ENCODE measurements at regions of chr20 and their contacts with region 1.

Region 1: DNA sequence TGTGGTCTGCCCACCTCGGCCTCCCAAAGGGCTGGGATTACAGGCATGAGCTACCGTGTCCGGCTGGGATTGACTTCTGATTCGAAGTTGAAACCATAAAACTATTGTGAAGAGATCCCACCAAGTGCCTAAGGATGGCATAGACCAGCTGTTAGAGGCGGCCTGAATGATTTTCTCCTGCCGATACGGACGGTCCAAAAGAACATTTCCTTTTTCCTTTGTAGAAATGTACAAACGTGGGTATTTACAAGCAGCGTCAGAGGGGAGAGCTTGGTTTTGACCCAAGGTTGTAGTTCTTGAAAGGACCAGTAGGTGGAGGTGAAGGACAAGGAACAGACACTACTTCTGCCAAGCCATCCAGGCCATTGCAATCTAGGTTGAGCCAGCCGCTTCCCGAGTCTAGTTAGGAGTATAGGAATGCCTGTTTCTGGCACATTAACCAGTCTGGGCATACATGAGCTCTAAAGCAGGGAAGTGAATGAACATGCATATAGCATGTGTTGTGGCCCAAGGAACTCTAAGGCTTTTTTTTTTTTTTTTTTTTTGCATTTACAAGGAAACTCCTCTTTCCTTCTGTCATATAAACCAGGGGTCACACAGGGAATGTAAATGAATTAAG is 29.1 kb downstream of the MOCS3 start:
- DNase-seq: peak; percentile 99
- ATAC-seq: peak; percentile 97
- H3K4me3 ChIP-seq: 0 out of 2 replicates have a peak overlapping the region, but pooled peaks have one; percentile 10
- H3K27ac ChIP-seq: no peak overlapping the region
- H3K4me1 ChIP-seq: peaks cover 18% of the 10 kb centered on the region
- H3K27me3 ChIP-seq: no peaks in the 10 kb centered on the region
- CTCF ChIP-seq: peak; percentile 98

Region 2: GRCh38 chr20:49915378-49916145 is 1072.1 kb before region 1 on chr20 and contains the start of gene SPATA2:
- CTCF ChIA-PET with region 1: no interaction called
- POLR2A ChIA-PET with region 1: no interaction called
- intact Hi-C with region 1: no loop called
- DNase-seq: peak; percentile 96
- ATAC-seq: peak; percentile 88
- H3K4me3 ChIP-seq: peak within 1 kb of the TSS; percentile 81
- H3K27ac ChIP-seq: peak within 1 kb of the TSS; percentile 96
- H3K4me1 ChIP-seq: peaks cover 23% of the 10 kb centered on the region
- H3K27me3 ChIP-seq: no peaks in the 10 kb centered on the region
- CTCF ChIP-seq: no peak
- total RNA-seq, gene SPATA2: 7.4 and 8.1 TPM in 2 replicates

Region 3: DNA sequence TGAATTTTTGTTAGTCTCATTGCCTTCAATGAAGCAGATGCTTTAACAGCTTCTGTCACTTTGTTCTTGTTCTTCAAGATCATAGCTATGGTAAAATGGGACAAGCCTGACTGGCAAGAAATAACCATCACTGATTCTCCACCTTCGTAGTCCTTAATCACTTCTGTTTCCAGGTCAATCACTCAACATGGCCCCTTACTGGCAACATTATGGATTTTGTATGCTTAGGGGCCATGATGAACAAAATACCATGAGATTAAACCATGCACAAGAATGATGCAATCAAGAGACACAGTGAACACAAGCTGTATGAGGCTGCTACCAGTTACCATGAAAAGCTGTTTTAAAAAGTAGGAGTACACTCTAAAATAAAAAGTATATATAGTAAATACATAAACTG is 89.2 kb before region 1 on chr20:
- CTCF ChIA-PET with region 1: no interaction called
- POLR2A ChIA-PET with region 1: no interaction called
- intact Hi-C with region 1: no loop called
- DNase-seq: no peak
- ATAC-seq: no peak
- H3K4me3 ChIP-seq: no peak overlapping the region
- H3K27ac ChIP-seq: no peak overlapping the region
- H3K4me1 ChIP-seq: no peaks in the 10 kb centered on the region
- H3K27me3 ChIP-seq: no peaks in the 10 kb centered on the region
- CTCF ChIP-seq: no peak

Region 4: GRCh38 chr20:51014797-51015722 is 27.4 kb after region 1 on chr20:
- CTCF ChIA-PET with region 1: interaction called, 17 read pairs
- POLR2A ChIA-PET with region 1: no interaction called
- intact Hi-C with region 1: no loop called
- DNase-seq: peak; percentile 90
- ATAC-seq: peak; percentile 85
- H3K4me3 ChIP-seq: no peak overlapping the region
- H3K27ac ChIP-seq: no peak overlapping the region
- H3K4me1 ChIP-seq: no peaks in the 10 kb centered on the region
- H3K27me3 ChIP-seq: no peaks in the 10 kb centered on the region
- CTCF ChIP-seq: peak; percentile 98

Region 5: DNA sequence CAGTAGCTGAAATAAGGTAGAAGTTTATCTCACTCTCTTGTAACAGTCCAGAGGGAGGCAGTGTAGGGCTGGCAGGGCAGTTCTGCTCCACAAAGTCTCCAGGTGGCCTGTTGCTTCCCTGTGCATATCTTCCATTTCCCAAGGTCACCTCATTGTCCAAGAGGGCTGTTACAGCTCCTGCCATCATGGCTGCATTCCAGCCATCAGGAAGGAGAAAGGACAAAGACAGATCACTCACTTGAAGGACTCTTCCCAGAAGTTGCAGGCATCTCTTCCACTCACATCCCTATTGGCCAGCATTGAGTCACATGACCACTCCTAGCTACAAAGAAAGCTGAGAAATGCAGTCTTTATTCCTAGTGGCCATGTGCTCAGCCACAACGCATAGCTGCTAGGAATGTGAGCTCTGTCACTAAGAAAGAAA is 185.3 kb after region 1 on chr20:
- CTCF ChIA-PET with region 1: no interaction called
- POLR2A ChIA-PET with region 1: no interaction called
- intact Hi-C with region 1: no loop called
- DNase-seq: no peak
- ATAC-seq: no peak
- H3K4me3 ChIP-seq: no peak overlapping the region
- H3K27ac ChIP-seq: no peak overlapping the region
- H3K4me1 ChIP-seq: no peaks in the 10 kb centered on the region
- H3K27me3 ChIP-seq: peaks cover 11% of the 10 kb centered on the region
- CTCF ChIP-seq: peak; percentile 47

Region 6: DNA sequence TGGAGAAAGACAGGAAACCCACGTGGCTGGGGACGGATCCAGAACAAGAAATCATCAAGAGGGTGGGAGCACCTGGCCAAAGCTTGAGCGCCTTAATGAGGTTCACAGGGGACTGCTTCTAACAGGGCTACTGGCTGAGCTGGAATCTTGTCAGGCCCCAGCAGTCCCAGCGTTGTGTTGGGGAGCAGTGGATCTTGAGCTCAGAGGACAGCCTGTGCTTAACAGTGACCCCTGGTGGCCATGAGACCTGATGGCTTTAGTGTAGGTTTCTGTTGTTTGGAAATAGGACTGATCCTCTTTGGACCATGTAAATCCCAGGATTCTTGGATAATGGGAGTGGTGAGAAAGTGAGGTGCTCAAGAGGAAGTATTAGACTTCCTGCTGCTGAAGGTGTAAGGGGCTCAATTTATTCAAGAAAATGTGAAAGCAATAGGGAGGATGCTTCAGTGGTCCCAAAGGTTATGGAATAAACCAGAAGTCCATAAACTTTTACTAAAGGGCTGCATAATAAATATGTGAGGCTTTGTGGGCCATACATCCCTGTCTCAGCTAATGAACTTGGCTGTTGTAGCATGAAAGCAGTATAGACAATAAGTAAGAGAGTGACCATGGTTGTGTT is 338.6 kb after region 1 on chr20:
- CTCF ChIA-PET with region 1: interaction called, 6 read pairs
- POLR2A ChIA-PET with region 1: no interaction called
- intact Hi-C with region 1: loop called (anchors 1 kb)
- DNase-seq: no peak
- ATAC-seq: no peak
- H3K4me3 ChIP-seq: no peak overlapping the region
- H3K27ac ChIP-seq: peak overlapping the region; percentile 88
- H3K4me1 ChIP-seq: peaks cover 17% of the 10 kb centered on the region
- H3K27me3 ChIP-seq: no peaks in the 10 kb centered on the region
- CTCF ChIP-seq: peak; percentile 77

Region 7: DNA sequence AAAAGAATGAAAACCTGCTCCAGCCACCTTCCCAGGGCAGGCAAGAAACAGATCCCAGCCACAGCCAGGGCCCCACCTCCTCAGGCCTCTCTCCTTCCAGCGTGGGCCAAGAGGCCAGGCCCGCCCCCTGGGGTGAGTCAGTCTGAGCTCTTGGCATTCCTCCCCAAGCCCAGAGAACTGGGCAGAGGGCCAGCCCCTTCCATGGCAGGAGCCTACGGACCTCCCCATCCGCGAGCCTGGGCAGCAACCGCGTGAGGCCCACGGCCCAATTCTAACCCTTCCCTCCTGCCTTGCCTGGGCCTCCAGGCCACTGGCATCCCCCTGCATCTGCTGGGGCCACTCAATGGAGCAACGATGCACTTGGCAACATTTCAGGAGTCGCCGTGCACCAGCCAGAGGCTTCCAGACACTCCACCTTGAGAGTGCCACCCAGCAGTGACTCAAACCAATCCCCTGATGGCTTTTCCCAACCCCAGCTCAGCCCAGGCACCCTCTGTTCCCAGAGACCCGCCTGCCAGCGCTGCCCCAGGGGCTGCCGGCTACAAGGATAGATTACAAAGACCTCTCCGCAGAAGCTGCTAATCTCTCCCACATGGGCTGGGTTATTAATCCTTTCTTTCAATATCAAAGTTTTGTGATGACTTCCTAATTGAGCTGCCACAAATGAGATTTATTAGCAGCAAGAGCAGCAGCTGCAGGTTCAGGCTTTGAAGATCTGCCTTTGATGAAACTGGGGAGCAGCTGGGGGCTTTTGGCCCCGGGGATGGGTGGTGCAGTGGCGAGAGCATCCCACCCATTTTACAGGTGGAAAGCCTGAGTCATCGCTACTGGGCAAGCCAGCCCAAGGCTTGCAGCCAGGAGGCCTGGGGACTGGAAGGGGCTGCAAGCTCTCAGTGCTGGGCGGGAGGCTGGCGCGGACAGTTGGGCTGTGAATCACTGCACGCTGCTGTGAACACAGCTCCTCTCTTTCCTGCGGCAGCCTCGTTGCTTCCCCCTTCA is 469.1 kb after region 1 on chr20:
- CTCF ChIA-PET with region 1: interaction called, 20 read pairs
- POLR2A ChIA-PET with region 1: no interaction called
- intact Hi-C with region 1: no loop called
- DNase-seq: peak; percentile 100
- ATAC-seq: peak; percentile 87
- H3K4me3 ChIP-seq: peak overlapping the region; percentile 55
- H3K27ac ChIP-seq: peak overlapping the region; percentile 91
- H3K4me1 ChIP-seq: peaks cover 24% of the 10 kb centered on the region
- H3K27me3 ChIP-seq: no peaks in the 10 kb centered on the region
- CTCF ChIP-seq: no peak

Region 8: DNA sequence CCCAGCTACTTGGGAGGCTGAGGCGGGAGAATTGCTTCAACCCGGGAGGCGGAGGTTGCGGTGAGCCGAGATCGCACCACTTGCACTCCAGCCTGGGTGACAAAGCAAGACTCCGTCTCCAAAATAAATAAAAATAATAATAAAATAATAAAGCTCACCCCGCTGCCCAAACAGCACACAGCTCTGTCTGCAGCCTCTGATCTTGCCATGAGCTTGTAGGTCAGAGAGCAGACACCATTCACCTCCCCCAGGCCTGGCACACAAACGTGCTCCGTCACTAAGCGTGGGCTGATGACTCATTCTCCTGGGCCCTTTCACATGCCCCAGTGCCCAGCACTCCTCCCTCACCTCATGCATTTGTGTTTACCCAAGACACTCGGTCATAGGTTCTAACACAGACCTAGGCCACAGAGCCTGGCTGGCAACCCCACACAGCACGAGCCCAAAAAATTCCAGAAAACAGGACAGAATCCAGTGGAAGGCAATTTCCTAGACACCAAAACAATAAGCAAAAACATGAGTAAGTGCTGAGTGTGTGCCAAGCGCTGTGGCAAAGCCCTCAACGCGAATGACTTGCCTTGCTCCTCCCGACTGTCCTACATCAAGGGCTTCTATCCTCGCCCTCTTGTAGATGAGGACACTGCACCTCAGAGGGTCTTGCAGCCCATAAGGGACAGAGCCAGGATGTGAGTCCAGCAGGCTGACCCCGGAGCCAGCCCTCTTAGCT is 762.5 kb after region 1 on chr20:
- CTCF ChIA-PET with region 1: no interaction called
- POLR2A ChIA-PET with region 1: no interaction called
- intact Hi-C with region 1: loop called (anchors 10 kb)
- DNase-seq: peak; percentile 100
- ATAC-seq: peak; percentile 87
- H3K4me3 ChIP-seq: peak overlapping the region; percentile 31; the same call in 1 of the 2 replicates
- H3K27ac ChIP-seq: peak overlapping the region; percentile 87
- H3K4me1 ChIP-seq: peaks cover 58% of the 10 kb centered on the region
- H3K27me3 ChIP-seq: no peaks in the 10 kb centered on the region
- CTCF ChIP-seq: no peak